Stomach (tissue), 19 donors: ENCODE measurements at regions of chr15 and their contacts with region 1.

Region 1: DNA sequence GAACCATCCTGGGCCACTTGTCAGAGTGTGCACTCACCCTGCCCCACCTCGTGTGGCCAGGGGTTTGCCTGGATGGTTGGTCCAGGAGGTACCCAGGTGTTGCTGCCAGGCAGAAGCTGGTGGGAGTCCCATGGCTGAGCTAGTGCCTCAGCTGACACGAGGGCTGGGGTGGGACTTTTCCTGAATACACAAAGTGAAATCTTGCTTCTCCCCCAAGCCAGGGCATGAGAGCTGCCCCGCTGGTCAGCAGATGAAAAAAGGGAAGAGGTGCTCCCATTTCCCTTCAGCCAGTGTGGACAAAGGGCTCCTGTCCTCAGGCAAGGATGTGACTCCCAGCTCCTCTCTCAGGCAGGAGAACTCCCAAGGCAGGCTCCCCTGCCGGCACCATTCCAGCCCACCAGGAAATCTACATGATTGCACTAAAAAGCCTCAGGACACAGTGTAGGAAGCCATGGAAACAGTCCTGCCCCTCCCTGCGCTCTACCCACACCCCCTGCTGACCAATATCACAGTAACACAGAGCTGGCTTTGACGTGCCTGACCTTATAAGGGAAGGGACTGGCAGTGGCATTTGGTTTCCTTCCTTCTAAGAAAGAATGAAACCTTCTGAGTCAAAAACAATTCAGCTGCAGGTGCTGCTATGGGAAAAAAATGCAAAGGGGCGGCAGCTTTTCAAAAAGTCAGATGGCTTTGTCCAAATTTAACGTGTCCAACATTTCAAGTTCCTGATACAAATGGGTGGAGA is 33.9 kb downstream of the MYO5C start:
- DNase-seq: peak; percentile 65 to 92
- H3K4me3 ChIP-seq: no peak overlapping the region
- H3K27ac ChIP-seq: peak overlapping the region; percentile 69 to 84 (median 74)
- H3K4me1 ChIP-seq: peaks cover 15 to 43% (median 33%) of the 10 kb centered on the region in 4 donors
- H3K27me3 ChIP-seq: no peaks in the 10 kb centered on the region
- CTCF ChIP-seq: peak in 1 of 7 experiments; percentile 15
- EP300 ChIP-seq: no peak
- POLR2A ChIP-seq: no peak

Region 2: DNA sequence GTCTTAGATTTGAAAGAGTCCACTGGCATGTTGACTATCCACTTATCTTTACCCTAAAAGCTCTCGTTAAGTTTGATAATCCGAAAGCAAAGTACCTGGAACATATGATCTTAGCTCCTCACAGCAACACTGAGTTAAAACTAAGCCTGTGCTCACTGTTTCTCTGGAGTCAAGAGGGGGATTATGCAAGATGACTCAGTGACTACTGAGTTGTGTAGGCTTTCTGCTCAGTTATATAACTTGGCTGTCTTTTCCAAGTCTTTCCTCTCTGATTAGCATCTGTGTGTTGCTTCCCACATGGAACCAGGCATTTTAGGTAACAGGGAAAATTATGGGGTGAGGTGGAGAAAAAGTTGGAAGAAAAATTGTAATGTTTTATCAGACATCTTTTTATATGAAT is 65.1 kb after region 1 on chr15:
- intact Hi-C with region 1: loop called (anchors 10 kb)
- DNase-seq: no peak
- H3K4me3 ChIP-seq: no peak overlapping the region
- H3K27ac ChIP-seq: no peak overlapping the region
- H3K4me1 ChIP-seq: peaks cover 0 to 17% (median 11%) of the 10 kb centered on the region in 4 donors
- H3K27me3 ChIP-seq: no peaks in the 10 kb centered on the region
- CTCF ChIP-seq: no peak
- EP300 ChIP-seq: no peak
- POLR2A ChIP-seq: no peak

Region 3: DNA sequence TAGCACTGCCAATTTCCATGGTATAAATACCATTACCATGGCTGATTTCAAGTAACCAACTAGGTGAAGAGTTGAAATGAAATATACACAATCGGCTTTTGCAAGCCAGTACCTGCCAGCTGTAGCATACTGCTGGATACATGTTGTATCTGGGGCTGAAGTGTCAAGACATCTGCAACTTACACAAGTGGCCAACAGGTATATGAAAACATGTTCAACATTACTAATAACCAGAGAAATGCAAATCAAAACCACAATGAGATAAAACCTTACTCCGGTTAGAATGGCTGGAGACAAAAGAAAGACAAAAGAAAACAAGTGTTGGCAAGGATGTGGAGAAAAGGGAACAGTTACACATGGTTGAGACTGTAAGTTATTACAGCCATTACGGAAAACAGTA is 405.9 kb after region 1 on chr15:
- intact Hi-C with region 1: no loop called
- DNase-seq: no peak
- H3K4me3 ChIP-seq: no peak overlapping the region
- H3K27ac ChIP-seq: no peak overlapping the region
- H3K4me1 ChIP-seq: peaks cover under 1 to 59% (median 25%) of the 10 kb centered on the region in 4 donors
- H3K27me3 ChIP-seq: no peaks in the 10 kb centered on the region
- CTCF ChIP-seq: no peak
- EP300 ChIP-seq: no peak
- POLR2A ChIP-seq: no peak